ENCODE measurements at regions of chr2 and their contacts with region 1.

Region 1: DNA sequence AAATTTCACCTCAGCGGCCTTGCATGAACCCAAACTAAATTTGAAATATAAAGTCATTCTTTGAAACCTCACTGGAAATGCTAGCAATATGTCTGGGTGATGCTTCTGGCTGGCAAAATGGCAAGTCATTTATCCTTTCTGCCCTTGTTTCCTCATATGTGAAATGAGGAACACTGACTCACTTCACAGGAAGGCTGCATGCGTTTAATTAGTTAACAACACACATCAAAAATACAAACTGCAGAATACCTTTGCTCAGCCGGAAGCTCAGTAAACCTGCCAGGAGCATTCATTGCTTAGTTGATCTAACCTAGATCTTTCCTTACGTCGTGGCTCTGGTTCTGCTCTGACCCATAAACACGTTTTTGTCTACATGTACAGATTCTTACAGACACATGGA is 214.2 kb upstream of the ACVR2A start:
- DNase-seq: peak; percentile 50
- H3K4me3 Mint-ChIP-seq: no peak overlapping the region
- H3K27ac Mint-ChIP-seq: peak overlapping the region; percentile 80
- H3K4me1 Mint-ChIP-seq: peaks cover 22% of the 10 kb centered on the region
- H3K27me3 Mint-ChIP-seq: no peaks in the 10 kb centered on the region

Region 2: DNA sequence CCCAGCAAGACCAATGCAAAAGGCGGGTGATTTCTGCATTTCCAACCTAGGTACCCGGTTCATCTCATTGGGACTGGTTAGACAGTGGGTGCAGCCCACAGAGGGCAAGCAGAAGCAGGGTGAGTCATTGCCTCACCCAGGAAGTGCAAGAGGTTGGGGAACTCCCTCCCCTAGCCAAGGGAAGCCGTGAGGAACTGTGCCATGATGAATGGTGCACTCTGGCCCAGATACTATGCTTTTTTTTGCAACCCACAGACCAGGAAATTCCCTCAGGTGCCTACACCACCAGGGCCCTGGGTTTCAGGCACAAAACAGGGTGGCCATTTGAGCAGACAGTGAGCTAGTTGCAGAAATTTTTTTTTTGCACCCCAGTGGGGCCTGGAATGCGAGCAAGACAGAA is 448.3 kb before region 1 on chr2:
- CTCF ChIA-PET with region 1: no interaction called
- intact Hi-C with region 1: loop called (anchors 1 kb)
- DNase-seq: peak; percentile 72
- H3K4me3 Mint-ChIP-seq: no peak overlapping the region
- H3K27ac Mint-ChIP-seq: peak overlapping the region; percentile 73
- H3K4me1 Mint-ChIP-seq: peaks cover 18% of the 10 kb centered on the region
- H3K27me3 Mint-ChIP-seq: peaks cover 4% of the 10 kb centered on the region

Region 3: DNA sequence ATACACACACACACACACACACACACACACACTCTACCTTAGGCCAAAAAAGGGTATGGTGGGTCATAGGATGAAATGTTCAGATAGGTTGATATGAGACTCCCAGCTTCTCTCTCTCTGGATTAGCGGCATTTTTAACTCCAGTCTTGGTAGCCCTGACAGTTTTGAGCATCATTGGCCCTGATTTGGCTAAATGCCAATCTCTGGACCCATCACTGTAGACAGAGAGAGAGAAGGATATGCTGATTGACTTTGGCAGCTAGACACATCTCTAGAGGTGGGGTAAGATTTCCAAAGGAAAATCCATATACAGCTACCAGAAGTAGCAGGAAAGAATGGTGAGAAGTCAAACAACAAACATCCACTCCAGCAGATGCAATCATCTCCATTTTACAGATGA is 699.5 kb after region 1 on chr2:
- CTCF ChIA-PET with region 1: no interaction called
- intact Hi-C with region 1: no loop called
- DNase-seq: no peak
- H3K4me3 Mint-ChIP-seq: no peak overlapping the region
- H3K27ac Mint-ChIP-seq: no peak overlapping the region
- H3K4me1 Mint-ChIP-seq: no peaks in the 10 kb centered on the region
- H3K27me3 Mint-ChIP-seq: no peaks in the 10 kb centered on the region

Region 4: DNA sequence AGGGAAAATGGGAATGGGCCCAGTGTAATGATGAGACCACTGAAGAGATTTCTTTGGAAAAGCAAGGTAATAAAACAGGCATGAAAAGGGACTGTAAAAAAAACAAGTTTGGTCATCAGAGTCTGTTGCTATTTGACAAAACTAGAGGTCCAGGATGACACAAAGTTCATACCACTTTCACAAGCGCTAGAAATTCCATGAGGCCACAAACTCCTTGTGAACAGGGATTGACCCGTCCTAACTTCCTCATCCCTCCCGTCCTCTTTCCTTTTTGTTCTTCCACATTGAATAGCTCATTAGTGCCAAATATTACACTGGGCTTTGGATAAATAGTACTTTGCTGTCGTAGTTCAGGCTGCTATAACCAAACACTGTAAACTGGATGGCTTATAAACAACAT is 825.2 kb after region 1 on chr2:
- CTCF ChIA-PET with region 1: no interaction called
- intact Hi-C with region 1: no loop called
- DNase-seq: no peak
- H3K4me3 Mint-ChIP-seq: no peak overlapping the region
- H3K27ac Mint-ChIP-seq: no peak overlapping the region
- H3K4me1 Mint-ChIP-seq: no peaks in the 10 kb centered on the region
- H3K27me3 Mint-ChIP-seq: no peaks in the 10 kb centered on the region